B cell (primary cell): ENCODE measurements at regions of chr4 and their contacts with region 1.

Region 1: GRCh38 chr4:184538023-184538599 is 63.8 kb upstream of the IRF2 start:
- DNase-seq: peak; percentile 90
- ATAC-seq: peak; percentile 71
- H3K4me3 ChIP-seq: peak overlapping the region; percentile 74 to 98 (median 81)
- H3K4me3 Mint-ChIP-seq: peak overlapping the region; percentile 96
- H3K27ac ChIP-seq: peak overlapping the region; percentile 98
- H3K27ac Mint-ChIP-seq: peak overlapping the region; percentile 100
- H3K4me1 ChIP-seq: peaks cover 33 to 38% of the 10 kb centered on the region in 2 donors
- H3K4me1 Mint-ChIP-seq: peaks cover 42% of the 10 kb centered on the region
- H3K27me3 ChIP-seq: no peaks in the 10 kb centered on the region
- H3K27me3 Mint-ChIP-seq: no peaks in the 10 kb centered on the region
- CTCF ChIP-seq: peak; percentile 61

Region 2: DNA sequence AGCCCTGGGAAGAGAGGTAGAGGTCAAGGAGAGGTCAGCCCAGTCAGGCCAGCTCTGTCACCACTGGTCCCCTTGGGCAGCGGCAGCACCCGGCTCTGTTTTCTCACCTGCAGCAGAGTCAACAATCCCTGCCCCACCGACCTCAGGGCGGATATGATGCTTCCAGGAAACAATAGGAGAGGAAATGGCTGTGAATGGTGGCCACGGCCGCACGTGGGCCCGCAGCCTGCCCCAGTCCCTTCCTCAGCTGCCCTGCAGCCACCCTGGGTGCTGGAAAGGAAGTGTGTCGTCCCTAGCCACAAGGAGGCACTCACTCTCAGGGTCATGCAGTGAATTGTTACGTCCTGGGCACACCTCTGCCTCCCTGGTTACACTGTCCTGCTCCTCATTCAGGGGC is 227.9 kb before region 1 on chr4:
- CTCF ChIA-PET with region 1: interaction called, 9 read pairs
- POLR2A ChIA-PET with region 1: interaction called, 8 read pairs
- intact Hi-C with region 1: loop called (anchors 1 kb)
- DNase-seq: peak; percentile 71
- ATAC-seq: peak; percentile 21
- H3K4me3 ChIP-seq: no peak overlapping the region
- H3K4me3 Mint-ChIP-seq: peak overlapping the region; percentile 29
- H3K27ac ChIP-seq: no peak overlapping the region
- H3K27ac Mint-ChIP-seq: peak overlapping the region; percentile 56
- H3K4me1 ChIP-seq: peaks cover 46 to 48% of the 10 kb centered on the region in 2 donors
- H3K4me1 Mint-ChIP-seq: peaks cover 60% of the 10 kb centered on the region
- H3K27me3 ChIP-seq: no peaks in the 10 kb centered on the region
- H3K27me3 Mint-ChIP-seq: no peaks in the 10 kb centered on the region
- CTCF ChIP-seq: peak; percentile 58

Region 3: DNA sequence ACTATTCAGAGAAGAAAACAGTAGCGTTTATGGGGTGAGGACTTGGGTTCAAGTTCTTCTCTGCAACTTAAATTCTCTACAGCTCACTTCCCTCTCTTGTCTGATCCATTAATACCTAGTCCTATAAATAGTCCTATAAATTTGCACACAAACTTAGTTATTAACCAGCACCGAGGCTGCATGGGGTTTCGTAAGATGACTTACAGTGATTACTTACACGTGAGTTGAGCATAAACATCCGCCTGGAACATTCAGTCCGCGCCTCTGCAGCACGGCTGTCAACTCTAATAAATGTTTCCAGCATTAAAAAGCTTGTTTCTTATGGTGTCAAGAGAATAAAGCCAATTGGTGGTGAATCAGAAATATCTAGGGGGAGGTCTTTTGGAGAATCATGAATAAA is 217.5 kb before region 1 on chr4:
- CTCF ChIA-PET with region 1: no interaction called
- POLR2A ChIA-PET with region 1: no interaction called
- intact Hi-C with region 1: no loop called
- DNase-seq: no peak
- ATAC-seq: no peak
- H3K4me3 ChIP-seq: no peak overlapping the region
- H3K4me3 Mint-ChIP-seq: no peak overlapping the region
- H3K27ac ChIP-seq: no peak overlapping the region
- H3K27ac Mint-ChIP-seq: peak overlapping the region; percentile 32
- H3K4me1 ChIP-seq: peaks cover 26 to 27% of the 10 kb centered on the region in 2 donors
- H3K4me1 Mint-ChIP-seq: peaks cover 49% of the 10 kb centered on the region
- H3K27me3 ChIP-seq: no peaks in the 10 kb centered on the region
- H3K27me3 Mint-ChIP-seq: no peaks in the 10 kb centered on the region
- CTCF ChIP-seq: no peak

Region 4: GRCh38 chr4:184417802-184418511 is 120.2 kb before region 1 on chr4:
- CTCF ChIA-PET with region 1: interaction called, 3 read pairs
- POLR2A ChIA-PET with region 1: interaction called, 3 read pairs
- intact Hi-C with region 1: loop called (anchors 2 kb)
- DNase-seq: peak; percentile 16
- ATAC-seq: peak; percentile 43
- H3K4me3 ChIP-seq: peak overlapping the region in 2 of 5 experiments; percentile 12 to 55
- H3K4me3 Mint-ChIP-seq: peak overlapping the region; percentile 48
- H3K27ac ChIP-seq: peak overlapping the region; percentile 79 to 84
- H3K27ac Mint-ChIP-seq: peak overlapping the region; percentile 91
- H3K4me1 ChIP-seq: peaks cover 45 to 57% of the 10 kb centered on the region in 2 donors
- H3K4me1 Mint-ChIP-seq: peaks cover 78% of the 10 kb centered on the region
- H3K27me3 ChIP-seq: no peaks in the 10 kb centered on the region
- H3K27me3 Mint-ChIP-seq: no peaks in the 10 kb centered on the region
- CTCF ChIP-seq: no peak

Region 5: GRCh38 chr4:184649026-184649970 is 111.2 kb after region 1 on chr4 and contains the starts of genes CASP3 and PRIMPOL:
- CTCF ChIA-PET with region 1: interaction called, 3 read pairs
- POLR2A ChIA-PET with region 1: interaction called, 4 read pairs
- intact Hi-C with region 1: loop called (anchors 1 kb)
- DNase-seq: peak; percentile 97
- ATAC-seq: peak; percentile 95
- H3K4me3 ChIP-seq: peak within 1 kb of the TSS; percentile 75 to 95 (median 89)
- H3K4me3 Mint-ChIP-seq: peak within 1 kb of the TSS; percentile 94
- H3K27ac ChIP-seq: peak within 1 kb of the TSS; percentile 71 to 95
- H3K27ac Mint-ChIP-seq: peak within 1 kb of the TSS; percentile 94
- H3K4me1 ChIP-seq: peaks cover 24 to 29% of the 10 kb centered on the region in 2 donors
- H3K4me1 Mint-ChIP-seq: peaks cover 44% of the 10 kb centered on the region
- H3K27me3 ChIP-seq: no peaks in the 10 kb centered on the region
- H3K27me3 Mint-ChIP-seq: no peaks in the 10 kb centered on the region
- CTCF ChIP-seq: peak; percentile 18
- total RNA-seq, gene CASP3: 15.8 and 16.8 TPM in 2 replicates
- total RNA-seq, gene PRIMPOL: 15.4 and 21.5 TPM in 2 replicates

Region 6: DNA sequence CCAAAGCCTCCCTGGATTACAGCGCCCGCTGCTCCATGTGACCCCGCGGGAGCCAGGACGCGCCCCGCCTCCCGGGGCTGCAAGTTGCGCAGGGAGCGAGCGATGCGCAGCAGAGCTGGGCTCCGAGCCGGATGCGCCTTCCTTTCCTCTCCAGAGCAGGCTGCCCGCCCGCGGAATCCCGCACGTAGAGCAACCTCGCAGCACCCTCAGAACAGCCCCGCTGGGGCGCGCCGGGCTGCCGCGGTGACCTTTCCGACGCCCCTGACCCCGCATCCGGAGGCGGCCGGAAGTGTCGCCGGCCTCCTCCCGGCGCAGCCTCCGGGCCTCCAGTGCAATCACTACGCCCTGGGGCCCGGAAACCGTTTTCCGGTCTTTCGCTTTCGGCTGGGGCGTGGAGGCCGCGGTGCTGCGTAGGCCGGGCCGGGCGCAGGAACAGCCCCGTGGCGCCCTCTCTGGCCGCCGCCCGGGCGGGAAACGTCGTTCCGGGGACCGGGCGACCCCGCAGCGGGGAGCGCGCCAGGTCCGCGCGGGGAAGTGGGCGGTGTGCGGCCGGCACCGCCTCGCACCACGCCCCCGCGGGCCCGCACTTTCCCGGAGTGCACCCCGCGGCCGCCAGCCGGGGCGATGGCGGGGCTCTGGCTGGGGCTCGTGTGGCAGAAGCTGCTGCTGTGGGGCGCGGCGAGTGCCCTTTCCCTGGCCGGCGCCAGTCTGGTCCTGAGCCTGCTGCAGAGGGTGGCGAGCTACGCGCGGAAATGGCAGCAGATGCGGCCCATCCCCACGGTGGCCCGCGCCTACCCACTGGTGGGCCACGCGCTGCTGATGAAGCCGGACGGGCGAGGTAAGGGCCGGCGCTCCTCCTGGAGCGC is 1653.3 kb after region 1 on chr4 and contains the start of gene CYP4V2:
- CTCF ChIA-PET with region 1: no interaction called
- POLR2A ChIA-PET with region 1: no interaction called
- intact Hi-C with region 1: loop called (anchors 5 kb)
- DNase-seq: peak; percentile 91
- ATAC-seq: peak; percentile 84
- H3K4me3 ChIP-seq: peak within 1 kb of the TSS; percentile 66 to 95 (median 90)
- H3K4me3 Mint-ChIP-seq: peak within 1 kb of the TSS; percentile 94
- H3K27ac ChIP-seq: peak within 1 kb of the TSS; percentile 89 to 91
- H3K27ac Mint-ChIP-seq: peak within 1 kb of the TSS; percentile 96
- H3K4me1 ChIP-seq: peaks cover 17 to 21% of the 10 kb centered on the region in 2 donors
- H3K4me1 Mint-ChIP-seq: peaks cover 27% of the 10 kb centered on the region
- H3K27me3 ChIP-seq: no peaks in the 10 kb centered on the region
- H3K27me3 Mint-ChIP-seq: no peaks in the 10 kb centered on the region
- CTCF ChIP-seq: peak; percentile 51
- total RNA-seq, gene CYP4V2: 18.3 and 19.7 TPM in 2 replicates